ENCODE measurements at regions of chr17 and their contacts with region 1.

Region 1: DNA sequence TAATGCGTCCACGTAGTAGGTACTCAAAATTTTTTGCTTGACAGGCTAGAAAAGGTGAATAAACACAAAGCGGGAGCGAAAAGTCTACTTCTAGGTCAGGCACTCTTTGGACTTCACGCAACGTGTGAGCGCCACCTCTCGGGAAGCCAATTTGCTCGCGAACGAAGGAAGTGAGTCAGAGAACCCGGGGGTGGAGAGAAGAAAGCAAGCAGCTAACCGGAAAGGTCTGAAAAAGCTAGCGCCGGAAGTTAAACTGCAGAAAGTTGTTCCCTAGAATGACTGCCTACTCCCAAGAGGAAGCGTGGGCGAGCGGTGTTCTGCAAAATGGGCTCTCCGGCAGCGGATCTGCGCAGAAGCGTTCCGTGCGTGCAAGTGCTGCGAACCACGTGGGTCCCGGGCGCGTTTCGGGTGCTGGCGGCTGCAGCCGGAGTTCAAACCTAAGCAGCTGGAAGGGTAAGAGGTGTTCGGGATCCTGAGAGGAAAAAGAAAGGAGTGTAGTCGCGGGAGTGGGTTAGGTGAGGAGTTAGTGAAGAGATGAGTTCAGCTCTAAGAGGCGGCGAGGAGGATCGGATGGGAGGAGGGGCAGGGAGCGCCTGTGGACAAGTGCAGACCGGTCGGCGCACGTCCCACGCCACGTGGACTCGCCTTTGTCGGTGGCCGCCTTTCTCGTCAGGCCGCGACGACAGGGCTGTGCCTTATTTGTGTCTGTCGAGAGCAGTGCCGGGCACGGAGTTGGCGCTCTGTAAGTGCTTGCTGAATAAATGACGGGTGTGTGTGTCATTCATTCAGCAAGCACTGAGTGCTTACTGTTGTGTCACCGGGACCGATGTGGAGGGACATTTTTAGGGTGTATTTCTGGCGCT is at the start of gene NME1:
- DNase-seq: peak; percentile 96
- ATAC-seq: peak; percentile 97
- total RNA-seq, gene NME1: 21.1 TPM

Region 2: DNA sequence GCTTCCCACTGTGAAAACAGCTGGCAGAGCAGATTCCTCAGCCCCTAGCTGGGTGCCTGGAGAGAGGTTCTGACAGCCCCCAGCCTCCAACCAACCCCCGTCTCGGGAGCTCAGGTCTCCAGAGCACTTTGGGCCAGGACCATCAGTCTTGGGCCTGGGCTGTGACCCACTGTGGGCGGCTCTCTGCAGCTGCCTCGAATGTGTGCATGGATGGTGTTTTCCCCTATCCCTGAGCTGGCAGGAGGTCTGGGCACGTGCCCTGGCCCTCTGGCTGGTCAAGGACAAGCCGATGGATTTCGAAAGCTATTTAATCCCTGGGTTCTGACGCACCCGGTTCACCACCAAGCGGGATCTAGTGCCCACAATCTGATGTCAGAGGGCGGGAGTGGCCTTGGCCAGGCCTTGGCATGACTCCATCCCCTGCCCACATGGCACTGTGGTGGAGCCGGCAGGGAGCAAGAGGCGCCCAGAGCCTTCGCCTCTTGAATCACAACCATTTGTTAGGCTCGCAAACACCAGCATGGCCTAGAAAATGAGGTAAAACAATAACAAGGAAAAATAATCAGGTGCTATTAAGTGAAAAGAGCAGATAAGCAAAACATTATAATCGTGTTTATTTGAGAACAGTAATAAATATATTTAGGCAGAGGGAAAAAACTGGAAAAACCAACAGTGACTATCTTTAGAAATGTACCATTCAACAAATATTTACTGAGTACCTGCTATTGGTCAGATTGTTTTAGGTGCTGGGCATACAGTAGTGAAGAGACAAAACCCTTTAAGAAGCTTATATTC is 218.0 kb before region 1 on chr17:
- intact Hi-C with region 1: no loop called
- DNase-seq: peak; percentile 74
- ATAC-seq: peak; percentile 8

Region 3: GRCh38 chr17:51000835-51001638 is 152.4 kb before region 1 on chr17:
- intact Hi-C with region 1: loop called (anchors 2 kb)
- DNase-seq: no peak
- ATAC-seq: peak; percentile 79

Region 4: DNA sequence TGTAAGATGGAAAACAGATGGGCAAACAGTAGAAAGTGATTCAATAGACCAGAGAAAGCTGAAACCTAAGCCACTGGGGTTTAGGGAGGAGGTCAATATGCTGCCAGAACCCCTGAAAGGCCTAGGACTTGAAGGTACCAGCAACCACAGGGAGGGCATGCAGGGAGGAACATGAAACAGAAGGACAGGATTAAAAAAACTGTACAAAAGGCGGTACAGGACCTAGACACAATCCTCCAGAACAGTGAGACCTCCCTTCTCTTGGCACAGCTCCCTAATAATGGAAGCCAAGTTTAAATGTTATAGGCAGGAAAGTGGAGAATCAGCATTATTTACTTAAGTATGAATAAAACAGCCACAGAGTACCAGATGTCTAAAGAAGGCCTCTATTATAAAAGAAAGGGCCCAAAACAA is 138.3 kb before region 1 on chr17:
- intact Hi-C with region 1: no loop called
- DNase-seq: no peak
- ATAC-seq: no peak

Measured in Right ventricle myocardium superior (tissue), 1 donor.